GM13977 (cell line): ENCODE measurements at regions of chr9 and their contacts with region 1.

Region 1: GRCh38 chr9:133532937-133533668 is 1.4 kb upstream of the ADAMTSL2 start:
- DNase-seq: peak; percentile 82
- CTCF ChIP-seq: peak; percentile 77

Region 2: DNA sequence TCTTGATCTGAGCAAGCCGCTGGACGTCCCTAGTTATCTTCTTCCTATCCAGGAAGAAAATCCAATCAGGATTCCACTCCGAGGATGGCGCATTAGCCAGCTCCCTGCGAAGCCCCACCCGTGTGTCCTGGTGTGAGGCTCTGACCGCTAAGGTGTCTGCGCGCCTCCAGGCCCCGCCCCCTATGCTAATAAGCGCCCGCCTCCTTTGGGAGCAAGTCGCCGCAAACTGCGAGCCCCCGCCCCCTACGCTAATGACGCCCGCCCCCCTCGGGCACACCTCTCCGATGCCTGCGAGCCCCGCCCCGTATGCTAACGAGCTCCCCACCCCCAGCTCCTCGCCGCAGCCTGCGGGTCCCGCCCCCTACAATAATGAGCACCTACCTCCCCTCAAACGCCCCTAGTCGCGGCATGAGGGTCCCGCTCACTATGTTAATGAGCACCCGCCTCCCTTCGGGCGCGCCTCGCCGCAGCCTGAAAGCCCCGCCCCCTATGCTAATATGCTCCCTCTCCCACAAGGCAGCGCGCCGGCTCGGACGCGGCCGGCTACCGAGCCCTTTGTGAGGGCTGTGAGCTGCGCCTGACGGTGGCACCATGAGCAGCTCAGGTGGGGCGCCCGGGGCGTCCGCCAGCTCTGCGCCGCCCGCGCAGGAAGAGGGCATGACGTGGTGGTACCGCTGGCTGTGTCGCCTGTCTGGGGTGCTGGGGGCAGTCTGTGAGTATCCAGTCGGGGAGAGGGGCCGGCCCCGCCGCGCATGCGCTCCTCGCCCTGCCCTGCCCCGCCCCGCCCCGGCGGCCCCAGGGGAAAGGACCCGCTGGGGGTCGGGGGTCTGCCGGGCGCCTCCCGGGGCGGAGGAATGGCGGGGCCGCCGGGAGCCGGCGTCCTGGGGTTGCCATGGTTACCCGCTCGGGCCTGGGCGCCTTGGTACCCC is 73.4 kb before region 1 on chr9 and contains the start of gene CACFD1:
- in situ Hi-C with region 1: no loop called
- DNase-seq: peak; percentile 99
- CTCF ChIP-seq: no peak

Region 3: GRCh38 chr9:133742849-133743444 is 209.8 kb after region 1 on chr9:
- in situ Hi-C with region 1: loop called (anchors 25 kb)
- DNase-seq: peak; percentile 91
- CTCF ChIP-seq: peak; percentile 98

Region 4: GRCh38 chr9:134024828-134025605 is 491.9 kb after region 1 on chr9 and contains the start of gene BRD3OS:
- in situ Hi-C with region 1: loop called (anchors 25 kb)
- DNase-seq: peak; percentile 98
- CTCF ChIP-seq: no peak